Caco-2 (cell line): ENCODE measurements at regions of chr18 and their contacts with region 1.

Region 1: GRCh38 chr18:24118750-24119577 is 19.9 kb upstream of the CABYR start:
- DNase-seq: peak; percentile 48 to 52
- H3K4me3 ChIP-seq: no peak overlapping the region
- H3K4me3 Mint-ChIP-seq: no peak overlapping the region
- H3K27ac Mint-ChIP-seq: no peak overlapping the region
- H3K4me1 ChIP-seq: no peaks in the 10 kb centered on the region
- H3K4me1 Mint-ChIP-seq: no peaks in the 10 kb centered on the region
- H3K27me3 ChIP-seq: no peaks in the 10 kb centered on the region
- H3K27me3 Mint-ChIP-seq: no peaks in the 10 kb centered on the region
- CTCF ChIP-seq: peak; percentile 40 to 57

Region 2: GRCh38 chr18:23924813-23925212 is 194.2 kb before region 1 on chr18:
- CTCF ChIA-PET with region 1: no interaction called
- POLR2A ChIA-PET with region 1: no interaction called
- intact Hi-C with region 1: loop called (anchors 10 kb)
- DNase-seq: no peak
- H3K4me3 ChIP-seq: no peak overlapping the region
- H3K4me3 Mint-ChIP-seq: no peak overlapping the region
- H3K27ac Mint-ChIP-seq: no peak overlapping the region
- H3K4me1 ChIP-seq: no peaks in the 10 kb centered on the region
- H3K4me1 Mint-ChIP-seq: no peaks in the 10 kb centered on the region
- H3K27me3 ChIP-seq: no peaks in the 10 kb centered on the region
- H3K27me3 Mint-ChIP-seq: no peaks in the 10 kb centered on the region
- CTCF ChIP-seq: no peak

Region 3: GRCh38 chr18:23967321-23968089 is 151.5 kb before region 1 on chr18:
- CTCF ChIA-PET with region 1: no interaction called
- POLR2A ChIA-PET with region 1: no interaction called
- intact Hi-C with region 1: loop called (anchors 10 kb)
- DNase-seq: no peak
- H3K4me3 ChIP-seq: no peak overlapping the region
- H3K4me3 Mint-ChIP-seq: no peak overlapping the region
- H3K27ac Mint-ChIP-seq: no peak overlapping the region
- H3K4me1 ChIP-seq: no peaks in the 10 kb centered on the region
- H3K4me1 Mint-ChIP-seq: no peaks in the 10 kb centered on the region
- H3K27me3 ChIP-seq: no peaks in the 10 kb centered on the region
- H3K27me3 Mint-ChIP-seq: no peaks in the 10 kb centered on the region
- CTCF ChIP-seq: no peak

Region 4: DNA sequence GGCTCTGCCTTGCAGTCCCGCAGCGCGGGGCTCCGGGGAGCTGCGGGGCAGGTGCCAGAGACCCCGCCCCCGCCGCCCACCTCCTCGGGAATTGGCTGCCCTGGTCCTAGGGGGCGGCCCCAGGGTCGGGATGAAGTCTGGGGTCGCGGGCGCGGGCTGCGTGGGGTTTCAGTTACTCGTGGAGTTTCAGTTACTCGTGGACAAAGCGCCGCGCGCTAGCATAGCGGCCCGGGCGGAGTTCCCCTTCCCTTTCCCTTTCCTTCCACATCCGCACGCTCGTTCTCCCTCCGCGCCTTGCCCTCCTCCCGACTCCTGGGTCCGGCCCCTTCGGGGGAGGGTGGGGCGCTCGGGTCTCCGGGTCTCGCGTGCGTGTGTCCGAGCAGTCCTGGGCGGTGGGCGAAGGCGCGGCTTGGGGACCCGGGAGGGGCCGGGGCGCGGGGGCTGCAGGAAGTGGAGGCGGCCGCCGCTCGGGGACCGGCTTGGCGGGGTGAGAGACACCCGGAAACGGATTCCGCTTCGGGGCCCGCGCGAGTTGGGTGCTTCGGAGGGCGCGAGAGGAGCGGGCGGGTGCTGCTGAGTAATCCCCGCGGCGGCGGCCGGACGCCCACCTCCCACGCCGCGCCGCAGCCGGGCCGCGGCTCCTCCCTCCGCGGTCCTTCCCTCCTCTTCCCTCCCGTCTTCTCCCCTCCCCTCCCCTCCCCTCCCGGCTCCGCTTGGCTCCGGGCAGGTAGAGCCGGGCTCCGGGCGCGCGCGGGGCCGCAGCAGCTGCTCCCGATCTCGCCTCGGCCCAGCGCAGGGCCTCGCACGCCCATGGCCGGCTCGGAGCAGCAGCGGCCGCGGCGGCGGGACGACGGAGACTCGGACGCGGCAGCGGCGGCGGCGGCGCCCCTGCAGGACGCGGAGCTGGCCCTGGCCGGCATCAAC is 104.6 kb before region 1 on chr18 and contains the start of gene TTC39C:
- CTCF ChIA-PET with region 1: no interaction called
- POLR2A ChIA-PET with region 1: no interaction called
- intact Hi-C with region 1: loop called (anchors 5 kb)
- DNase-seq: peak; percentile 38 to 47
- H3K4me3 ChIP-seq: peak within 1 kb of the TSS; percentile 72
- H3K4me3 Mint-ChIP-seq: peak within 1 kb of the TSS; percentile 81
- H3K27ac Mint-ChIP-seq: peak within 1 kb of the TSS; percentile 59
- H3K4me1 ChIP-seq: no peaks in the 10 kb centered on the region
- H3K4me1 Mint-ChIP-seq: no peaks in the 10 kb centered on the region
- H3K27me3 ChIP-seq: no peaks in the 10 kb centered on the region
- H3K27me3 Mint-ChIP-seq: no peaks in the 10 kb centered on the region
- CTCF ChIP-seq: no peak
- total RNA-seq, gene TTC39C: 9.1 and 9.3 TPM in 2 replicates

Region 5: GRCh38 chr18:24051031-24051947 is 67.7 kb before region 1 on chr18:
- CTCF ChIA-PET with region 1: no interaction called
- POLR2A ChIA-PET with region 1: no interaction called
- intact Hi-C with region 1: loop called (anchors 10 kb)
- DNase-seq: peak; percentile 52 to 53
- H3K4me3 ChIP-seq: no peak overlapping the region
- H3K4me3 Mint-ChIP-seq: peak overlapping the region; percentile 65
- H3K27ac Mint-ChIP-seq: peak overlapping the region; percentile 80
- H3K4me1 ChIP-seq: peaks cover 8% of the 10 kb centered on the region; the same call in 1 of the 2 replicates
- H3K4me1 Mint-ChIP-seq: peaks cover 13% of the 10 kb centered on the region
- H3K27me3 ChIP-seq: no peaks in the 10 kb centered on the region
- H3K27me3 Mint-ChIP-seq: no peaks in the 10 kb centered on the region
- CTCF ChIP-seq: no peak